Common myeloid progenitor, CD34-positive (primary cell): ENCODE measurements at regions of chr1 and their contacts with region 1.

Region 1: DNA sequence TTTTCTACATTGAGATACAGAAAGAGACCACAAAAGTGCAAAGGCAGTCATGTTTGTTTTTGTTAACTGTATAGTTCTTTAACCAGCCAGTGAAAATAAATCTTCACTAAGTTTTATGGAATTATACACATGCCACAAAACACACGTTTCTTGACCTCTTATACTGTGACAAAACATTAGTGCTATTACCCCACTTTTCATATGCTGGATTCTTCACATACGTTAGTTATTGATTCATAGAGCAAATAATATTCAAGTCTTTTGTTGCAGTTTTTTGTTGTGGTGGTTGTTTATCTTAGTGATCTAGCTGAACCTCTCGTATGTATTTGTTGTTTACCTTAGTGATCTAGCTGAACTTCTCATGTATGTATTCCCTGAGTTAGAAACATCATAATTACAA is 28.0 kb downstream of the LYPLAL1 start:
- DNase-seq: no peak
- H3K4me3 ChIP-seq: no peak overlapping the region
- H3K27ac ChIP-seq: no peak overlapping the region
- H3K4me1 ChIP-seq: no peaks in the 10 kb centered on the region
- H3K27me3 ChIP-seq: no peaks in the 10 kb centered on the region

Region 2: DNA sequence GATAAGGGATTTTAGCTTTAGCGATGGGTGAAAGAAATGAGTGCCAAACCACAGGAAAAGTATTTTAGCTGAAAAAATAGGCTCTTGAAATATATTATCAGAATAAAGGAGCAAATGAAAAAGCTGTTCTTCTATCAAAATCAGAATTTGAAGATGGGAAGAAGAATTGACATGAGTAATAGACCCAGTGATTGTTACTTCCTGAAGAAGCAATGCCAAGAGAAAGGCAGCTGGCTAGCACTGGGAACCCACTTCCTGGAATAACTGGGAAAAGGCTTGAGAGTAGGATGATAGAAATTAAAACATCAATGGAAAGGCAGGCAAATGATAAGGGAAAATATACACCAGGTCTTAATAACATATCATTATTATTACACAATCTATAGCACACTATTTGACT is 57.9 kb before region 1 on chr1:
- CTCF ChIA-PET with region 1: no interaction called
- POLR2A ChIA-PET with region 1: no interaction called
- DNase-seq: no peak
- H3K4me3 ChIP-seq: no peak overlapping the region
- H3K27ac ChIP-seq: no peak overlapping the region
- H3K4me1 ChIP-seq: no peaks in the 10 kb centered on the region
- H3K27me3 ChIP-seq: no peaks in the 10 kb centered on the region

Region 3: GRCh38 chr1:219189021-219189824 is 12.4 kb before region 1 on chr1:
- CTCF ChIA-PET with region 1: interaction called, 11 read pairs
- POLR2A ChIA-PET with region 1: no interaction called
- DNase-seq: peak in 2 of 3 donors; percentile 26 to 35
- H3K4me3 ChIP-seq: no peak overlapping the region
- H3K27ac ChIP-seq: no peak overlapping the region
- H3K4me1 ChIP-seq: peaks cover 0 to 10% (median 6%) of the 10 kb centered on the region in 4 experiments
- H3K27me3 ChIP-seq: no peaks in the 10 kb centered on the region